ENCODE measurements at regions of chr14 and their contacts with region 1.

Region 1: DNA sequence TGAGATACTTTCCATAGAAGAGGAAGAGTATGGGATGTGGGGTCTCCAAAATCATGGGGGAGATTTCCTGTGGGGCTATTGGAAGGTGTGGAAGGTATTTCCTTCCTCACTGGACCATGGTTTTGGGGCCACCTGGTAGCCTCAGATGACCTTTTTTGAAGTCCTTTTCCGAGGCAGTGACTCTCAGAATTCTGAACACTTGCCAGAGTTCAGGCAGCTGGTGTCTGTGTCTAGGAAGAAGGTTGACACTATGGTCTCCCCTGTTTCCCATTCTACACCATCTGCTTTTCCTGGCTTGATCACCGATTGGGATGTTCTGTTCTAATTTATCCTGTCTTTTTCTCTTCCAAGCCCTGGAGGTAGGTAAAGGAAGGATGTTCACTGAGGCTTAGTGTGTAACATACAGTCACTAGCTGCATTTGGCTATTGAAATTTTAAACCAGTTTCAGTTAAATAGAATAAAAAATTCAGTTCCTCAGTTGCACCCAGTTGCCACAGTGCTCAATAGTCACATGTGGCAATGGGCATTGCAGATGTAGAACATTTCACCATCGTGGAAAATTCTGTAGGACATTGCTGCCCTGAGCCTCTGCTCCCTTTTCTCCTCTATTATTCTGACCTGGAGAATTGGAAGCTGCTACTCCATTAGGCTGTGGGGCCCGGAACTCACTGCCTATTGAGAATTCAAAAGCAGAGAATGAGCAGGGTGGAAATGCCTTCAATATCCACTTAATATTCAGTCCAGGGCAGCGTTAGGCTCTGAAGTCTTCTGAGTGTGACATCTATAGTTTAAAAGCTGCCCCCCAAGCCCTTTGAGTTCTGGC is 11.0 kb upstream of the PLEKHG3 start:
- DNase-seq: no peak

Region 2: DNA sequence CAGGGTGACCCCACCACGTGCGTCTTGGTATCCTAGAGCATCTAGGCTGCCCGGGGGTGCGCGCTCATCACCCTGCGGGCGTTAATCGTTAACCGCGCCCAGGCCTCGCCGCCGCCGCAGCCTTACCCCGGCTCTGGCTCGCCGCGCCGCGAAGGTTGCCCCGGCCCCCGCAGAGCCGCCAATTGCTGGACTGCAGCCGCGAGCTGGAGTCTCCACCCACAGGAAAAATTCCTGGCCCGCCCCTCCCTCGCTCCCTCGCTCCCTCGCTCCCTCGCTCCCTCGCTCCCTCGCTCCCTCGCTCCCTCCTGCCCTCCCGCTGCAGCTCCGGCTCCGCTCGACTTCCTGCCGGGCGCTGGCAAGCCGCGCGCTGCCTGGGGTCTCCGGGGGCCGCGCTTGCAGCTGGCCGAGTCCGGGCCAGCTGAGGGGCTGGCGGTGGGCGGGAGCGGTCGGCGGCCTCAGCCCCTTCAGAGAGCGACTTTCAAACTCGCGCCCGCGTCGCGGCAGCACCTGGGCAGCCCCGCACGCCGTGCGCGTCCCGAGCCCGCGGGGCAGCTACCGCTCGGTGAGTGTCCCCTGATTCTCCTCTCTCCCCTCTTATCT is 11.0 kb after region 1 on chr14 and contains the start of gene PLEKHG3:
- CTCF ChIA-PET with region 1: no interaction called
- POLR2A ChIA-PET with region 1: interaction called, 11 read pairs
- DNase-seq: peak; percentile 80